ENCODE measurements at regions of chr6 and their contacts with region 1.

Region 1: GRCh38 chr6:72622094-72622940 is 453 bp downstream of the KCNQ5 start:
- DNase-seq: peak; percentile 49 to 60 (median 50)
- ATAC-seq: peak; percentile 58
- H3K4me3 ChIP-seq: peak overlapping the region; percentile 49
- H3K27ac ChIP-seq: peak overlapping the region; percentile 77
- H3K4me1 ChIP-seq: peaks cover 19 to 33% of the 10 kb centered on the region in 2 experiments; a peak in 4 of 5 replicates
- H3K27me3 ChIP-seq: no peaks in the 10 kb centered on the region
- CTCF ChIP-seq: peak in 1 of 3 experiments; percentile 25; a peak in 1 of 6 replicates
- EP300 ChIP-seq: no peak
- POLR2A ChIP-seq: no peak
- RAD21 ChIP-seq: no peak

Region 2: DNA sequence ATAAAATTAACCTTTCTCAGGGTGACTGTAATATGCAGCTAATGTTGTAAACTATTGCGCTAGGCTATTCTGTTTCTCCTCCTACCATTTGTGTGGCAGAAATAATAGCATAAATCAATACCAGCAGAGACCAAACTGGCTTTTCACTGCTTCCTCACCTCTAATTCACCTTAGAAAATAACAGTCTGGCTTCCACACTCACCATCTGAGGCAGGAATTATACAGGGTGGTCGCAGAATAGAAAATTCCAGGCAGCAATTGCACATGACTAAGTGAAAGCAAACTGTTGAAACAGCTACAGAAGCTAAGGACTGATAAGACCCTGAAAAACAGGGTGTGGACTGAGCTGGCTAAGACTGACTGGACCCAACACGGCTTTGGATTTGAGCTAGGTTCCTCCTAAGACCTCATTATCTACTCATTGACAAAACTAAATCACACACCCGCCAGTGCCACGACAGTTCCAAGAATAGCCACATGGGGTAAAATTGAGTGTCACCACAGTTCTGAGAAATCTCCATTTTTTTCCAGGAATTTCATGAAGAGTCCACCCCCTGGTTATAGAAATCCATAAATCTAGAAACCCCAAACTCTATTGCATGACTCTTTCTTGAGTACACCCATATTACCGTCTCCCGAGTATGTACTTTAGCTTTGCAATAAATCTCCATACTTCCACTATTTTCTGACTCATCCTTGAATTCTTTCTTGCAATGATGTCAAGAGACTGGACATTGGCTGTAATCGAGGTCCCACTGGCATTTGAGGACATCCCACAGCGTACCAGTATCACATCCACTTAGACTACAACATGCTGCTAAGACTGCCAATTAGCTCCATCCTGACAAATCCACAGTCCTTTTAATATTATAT is 61.4 kb before region 1 on chr6:
- CTCF ChIA-PET with region 1: no interaction called
- POLR2A ChIA-PET with region 1: interaction called, 3 read pairs
- in situ Hi-C with region 1: no loop called
- intact Hi-C with region 1: loop called (anchors 5 kb)
- DNase-seq: peak; percentile 60 to 98 (median 73)
- ATAC-seq: peak; percentile 91
- H3K4me3 ChIP-seq: peak overlapping the region; percentile 30
- H3K27ac ChIP-seq: peak overlapping the region; percentile 98
- H3K4me1 ChIP-seq: peaks cover 3 to 27% of the 10 kb centered on the region in 2 experiments
- H3K27me3 ChIP-seq: no peaks in the 10 kb centered on the region
- CTCF ChIP-seq: peak in 2 of 3 experiments; percentile 42 to 61; a peak in 4 of 6 replicates
- EP300 ChIP-seq: peak; percentile 96
- POLR2A ChIP-seq: peak; percentile 73
- RAD21 ChIP-seq: peak; percentile 6 to 19; a peak in 2 of 4 replicates

Region 3: GRCh38 chr6:72649032-72649984 is 27.0 kb after region 1 on chr6:
- CTCF ChIA-PET with region 1: no interaction called
- POLR2A ChIA-PET with region 1: no interaction called
- in situ Hi-C with region 1: no loop called
- intact Hi-C with region 1: no loop called
- DNase-seq: no peak
- ATAC-seq: peak; percentile 38; the same call in 2 of the 3 replicates
- H3K4me3 ChIP-seq: no peak overlapping the region
- H3K27ac ChIP-seq: no peak overlapping the region
- H3K4me1 ChIP-seq: no peaks in the 10 kb centered on the region
- H3K27me3 ChIP-seq: no peaks in the 10 kb centered on the region
- CTCF ChIP-seq: no peak
- EP300 ChIP-seq: no peak
- POLR2A ChIP-seq: no peak
- RAD21 ChIP-seq: no peak

Region 4: DNA sequence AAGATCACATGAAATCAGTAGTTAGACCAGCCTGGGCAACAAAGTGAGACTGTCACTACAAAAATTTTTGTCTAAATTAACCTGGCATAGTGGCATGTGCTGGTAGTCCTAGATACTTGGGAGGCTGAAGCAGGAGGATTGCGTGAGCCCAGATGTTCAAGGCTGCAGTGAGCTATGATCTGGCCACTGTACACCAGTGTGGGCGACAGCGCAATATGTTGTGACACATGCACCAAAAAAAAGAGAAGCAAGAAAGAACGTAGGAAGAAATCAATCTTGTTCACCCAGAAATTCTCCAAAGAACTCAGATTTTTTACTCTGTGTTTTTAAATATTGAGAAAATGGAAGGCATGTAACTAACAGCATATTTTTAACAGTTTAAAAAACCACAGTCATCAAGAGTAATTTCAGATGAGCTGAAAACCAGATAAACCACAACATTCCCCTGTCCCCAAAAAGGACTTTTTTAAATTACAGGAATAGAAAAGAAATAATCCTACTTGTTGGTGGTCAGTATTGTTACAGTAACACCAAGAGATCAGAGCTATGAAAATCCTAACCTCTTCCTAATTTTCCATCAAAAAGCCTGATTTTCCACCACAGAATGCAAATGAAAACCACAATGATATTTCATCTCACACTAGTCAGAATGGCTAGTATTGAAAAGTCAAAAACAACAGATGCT is 362.8 kb after region 1 on chr6:
- CTCF ChIA-PET with region 1: no interaction called
- POLR2A ChIA-PET with region 1: no interaction called
- in situ Hi-C with region 1: no loop called
- intact Hi-C with region 1: loop called (anchors 5 kb)
- DNase-seq: no peak
- ATAC-seq: no peak
- H3K4me3 ChIP-seq: no peak overlapping the region
- H3K27ac ChIP-seq: no peak overlapping the region
- H3K4me1 ChIP-seq: peaks cover 0 to 3% of the 10 kb centered on the region in 2 experiments; a peak in 1 of 5 replicates
- H3K27me3 ChIP-seq: no peaks in the 10 kb centered on the region
- CTCF ChIP-seq: no peak
- EP300 ChIP-seq: no peak
- POLR2A ChIP-seq: no peak
- RAD21 ChIP-seq: no peak

Region 5: DNA sequence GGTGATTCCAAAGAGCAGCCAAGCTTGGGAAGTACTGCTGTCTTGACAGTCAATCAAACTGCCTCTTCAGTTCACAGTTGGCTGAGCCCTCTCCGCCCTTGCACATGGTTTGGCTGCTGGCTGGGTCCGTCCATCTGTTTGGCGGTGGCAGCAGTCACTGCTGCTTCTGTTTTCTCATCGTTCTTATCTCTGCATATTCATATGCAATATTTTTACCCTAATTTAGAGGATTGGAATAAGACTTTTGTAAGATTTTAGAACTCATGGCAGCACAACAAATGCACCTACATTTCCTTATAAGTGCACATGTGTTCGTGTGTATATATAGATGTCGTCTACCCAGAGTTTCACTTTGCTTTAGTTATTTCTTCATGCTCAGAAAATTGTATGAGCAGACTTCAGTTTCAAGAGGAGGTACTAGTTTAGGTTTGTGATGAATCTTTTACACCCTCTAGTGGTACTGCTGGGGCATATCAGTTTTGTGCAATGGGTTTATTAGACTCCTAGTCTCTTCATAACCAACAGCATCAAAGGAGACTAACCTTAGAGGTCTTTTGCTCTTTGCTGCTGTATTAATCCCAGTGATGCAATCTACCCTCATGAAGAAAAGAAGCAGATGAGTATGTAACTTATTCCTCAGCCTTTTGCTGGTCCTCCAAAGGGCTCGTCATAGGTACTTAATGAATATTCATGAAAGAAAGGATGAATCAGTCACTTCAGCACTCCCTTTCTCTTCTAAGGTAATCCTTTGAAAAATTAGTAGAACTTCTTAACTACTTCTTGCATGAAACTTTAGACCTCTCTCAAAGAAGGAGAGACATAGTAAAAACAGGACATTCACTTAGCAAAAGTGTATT is 558.7 kb after region 1 on chr6:
- CTCF ChIA-PET with region 1: no interaction called
- POLR2A ChIA-PET with region 1: no interaction called
- in situ Hi-C with region 1: no loop called
- intact Hi-C with region 1: loop called (anchors 2 kb)
- DNase-seq: peak; percentile 30 to 55 (median 42)
- ATAC-seq: peak; percentile 96
- H3K4me3 ChIP-seq: no peak overlapping the region
- H3K27ac ChIP-seq: no peak overlapping the region
- H3K4me1 ChIP-seq: no peaks in the 10 kb centered on the region; a peak in 1 of 5 replicates
- H3K27me3 ChIP-seq: no peaks in the 10 kb centered on the region
- CTCF ChIP-seq: peak; percentile 59 to 85 (median 80); a peak in 5 of 6 replicates
- EP300 ChIP-seq: no peak
- POLR2A ChIP-seq: no peak
- RAD21 ChIP-seq: peak; percentile 85 to 91